CD4-positive, alpha-beta T cell (primary cell): ENCODE measurements at regions of chr1 and their contacts with region 1.

Region 1: DNA sequence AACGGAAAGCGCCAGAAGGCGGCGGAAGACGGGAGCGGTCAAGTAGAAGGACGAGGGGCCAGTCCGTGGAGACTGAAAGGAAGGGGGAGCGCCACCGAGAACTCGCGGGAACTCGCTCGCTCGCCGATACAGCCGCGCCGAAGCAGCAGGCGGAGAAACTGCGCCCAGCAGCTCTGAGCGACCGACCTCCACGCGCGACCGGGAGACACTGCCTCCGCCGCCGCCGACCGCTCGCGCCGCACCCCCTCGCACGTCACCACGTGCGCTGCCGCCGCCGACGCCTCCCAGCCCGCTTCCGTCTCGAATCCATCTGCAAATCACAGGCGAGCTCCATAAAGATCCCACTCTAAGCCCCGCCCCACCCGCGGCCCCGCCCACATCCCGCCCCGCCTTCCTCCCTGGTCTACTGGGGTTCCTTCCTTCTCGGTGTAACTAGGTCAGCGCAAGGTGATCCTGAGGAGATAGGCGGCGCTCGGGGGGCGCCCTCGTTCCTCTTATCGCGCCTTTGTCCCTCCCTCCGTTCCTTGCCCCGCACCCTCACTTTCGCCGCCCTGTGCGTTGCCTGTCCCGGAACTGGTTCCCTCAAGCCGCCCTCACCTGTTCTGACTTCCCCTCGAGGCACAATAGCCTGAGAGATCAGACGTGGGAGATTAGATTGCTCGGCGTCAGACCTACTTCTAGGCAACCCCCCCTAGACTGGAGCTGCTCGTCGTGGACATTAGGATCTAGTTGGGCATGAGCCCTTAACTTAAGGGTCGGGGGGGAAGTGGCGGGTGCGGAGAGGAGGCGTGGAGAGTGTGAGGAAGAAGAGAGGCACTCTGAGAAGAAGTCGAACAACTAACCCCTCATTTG is at the start of gene IVNS1ABP:
- DNase-seq: peak; percentile 94 to 99 (median 96)
- ATAC-seq: peak; percentile 68
- H3K4me3 ChIP-seq: peak within 1 kb of the TSS; percentile 88
- H3K4me3 Mint-ChIP-seq: peak within 1 kb of the TSS; percentile 95
- H3K27ac ChIP-seq: peak within 1 kb of the TSS; percentile 98 to 100
- H3K27ac Mint-ChIP-seq: peak within 1 kb of the TSS; percentile 98
- H3K4me1 ChIP-seq: peaks cover 17% of the 10 kb centered on the region
- H3K4me1 Mint-ChIP-seq: peaks cover 54% of the 10 kb centered on the region
- H3K27me3 ChIP-seq: no peaks in the 10 kb centered on the region
- H3K27me3 Mint-ChIP-seq: no peaks in the 10 kb centered on the region
- CTCF ChIP-seq: peak; percentile 43
- total RNA-seq, gene IVNS1ABP: 234 to 254 TPM

Region 2: DNA sequence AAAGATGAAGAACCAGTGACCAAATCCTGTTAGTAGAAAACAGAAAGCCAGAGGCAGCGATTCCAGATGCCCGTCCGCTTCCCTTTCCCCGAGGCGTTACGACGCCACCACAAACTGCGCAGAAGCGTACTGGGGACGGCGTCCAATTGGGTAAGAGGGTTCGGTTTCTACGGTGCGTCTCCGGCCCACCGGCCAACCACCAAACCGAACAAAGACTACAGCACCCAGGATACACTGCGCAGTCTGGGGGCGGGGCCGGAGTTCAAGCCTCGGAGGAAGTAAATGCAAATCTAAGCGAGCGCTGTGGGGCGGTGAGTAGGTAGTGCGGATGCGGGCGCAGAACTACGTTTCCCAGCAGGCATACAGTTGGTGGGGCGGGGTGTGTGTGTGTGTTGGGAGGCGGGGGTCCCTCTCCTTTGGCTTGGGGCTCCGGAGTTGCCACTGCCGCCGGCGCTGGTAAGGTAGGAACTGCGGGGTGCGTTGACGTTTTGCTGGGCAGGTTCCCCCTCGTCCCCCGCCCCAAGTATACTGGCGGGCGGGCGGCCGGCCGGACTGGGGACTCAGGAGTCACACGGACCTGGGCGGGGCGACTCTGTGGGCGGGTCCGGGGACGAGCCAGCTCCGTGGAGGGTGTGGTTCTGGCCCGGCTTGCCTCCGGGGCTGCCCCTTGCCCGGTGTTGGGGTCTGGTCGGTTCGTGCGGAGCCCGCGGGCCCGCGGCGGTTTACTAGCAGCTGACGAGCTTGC is 160.2 kb before region 1 on chr1 and contains the starts of genes SWT1 and TRMT1L:
- CTCF ChIA-PET with region 1: no interaction called
- POLR2A ChIA-PET with region 1: interaction called, 38 read pairs
- intact Hi-C with region 1: loop called (anchors 1 to 2 kb)
- DNase-seq: peak; percentile 96 to 99 (median 98)
- ATAC-seq: peak; percentile 91
- H3K4me3 ChIP-seq: peak within 1 kb of the TSS; percentile 92
- H3K4me3 Mint-ChIP-seq: peak within 1 kb of the TSS; percentile 99
- H3K27ac ChIP-seq: peak within 1 kb of the TSS; percentile 92 to 97
- H3K27ac Mint-ChIP-seq: peak within 1 kb of the TSS; percentile 95
- H3K4me1 ChIP-seq: peaks cover 16% of the 10 kb centered on the region
- H3K4me1 Mint-ChIP-seq: peaks cover 55% of the 10 kb centered on the region
- H3K27me3 ChIP-seq: no peaks in the 10 kb centered on the region
- H3K27me3 Mint-ChIP-seq: no peaks in the 10 kb centered on the region
- CTCF ChIP-seq: no peak
- total RNA-seq, gene SWT1: 4.1 to 5.3 TPM
- total RNA-seq, gene TRMT1L: 2.8 to 4.7 TPM

Region 3: DNA sequence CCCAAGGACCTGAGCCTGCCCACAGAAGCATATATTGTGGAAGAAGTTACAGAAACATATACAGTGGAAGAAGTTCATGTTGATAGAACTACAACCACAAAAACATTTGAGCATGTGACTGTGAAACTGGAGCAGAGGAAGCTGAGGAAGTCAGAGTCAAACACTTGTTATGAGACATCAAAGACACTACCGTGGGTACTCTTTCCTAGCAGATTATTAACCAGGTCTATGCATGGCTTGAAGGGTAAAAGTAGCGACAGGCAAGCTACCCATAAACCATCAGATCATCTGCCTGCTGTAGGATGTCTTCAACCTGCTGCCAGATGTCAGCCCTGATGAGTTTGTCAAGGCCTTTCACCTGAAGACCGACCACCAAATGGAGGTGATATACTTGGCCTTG is 36.0 kb before region 1 on chr1:
- CTCF ChIA-PET with region 1: interaction called, 4 read pairs
- POLR2A ChIA-PET with region 1: interaction called, 68 read pairs
- intact Hi-C with region 1: loop called (anchors 2 kb)
- DNase-seq: peak in 13 of 14 experiments; percentile 10 to 78 (median 25)
- ATAC-seq: peak; percentile 96
- H3K4me3 ChIP-seq: no peak overlapping the region
- H3K4me3 Mint-ChIP-seq: peak overlapping the region; percentile 83
- H3K27ac ChIP-seq: peak overlapping the region; percentile 58 to 62
- H3K27ac Mint-ChIP-seq: peak overlapping the region; percentile 91
- H3K4me1 ChIP-seq: peaks cover 45% of the 10 kb centered on the region
- H3K4me1 Mint-ChIP-seq: peaks cover 67% of the 10 kb centered on the region
- H3K27me3 ChIP-seq: no peaks in the 10 kb centered on the region
- H3K27me3 Mint-ChIP-seq: no peaks in the 10 kb centered on the region
- CTCF ChIP-seq: no peak

Region 4: DNA sequence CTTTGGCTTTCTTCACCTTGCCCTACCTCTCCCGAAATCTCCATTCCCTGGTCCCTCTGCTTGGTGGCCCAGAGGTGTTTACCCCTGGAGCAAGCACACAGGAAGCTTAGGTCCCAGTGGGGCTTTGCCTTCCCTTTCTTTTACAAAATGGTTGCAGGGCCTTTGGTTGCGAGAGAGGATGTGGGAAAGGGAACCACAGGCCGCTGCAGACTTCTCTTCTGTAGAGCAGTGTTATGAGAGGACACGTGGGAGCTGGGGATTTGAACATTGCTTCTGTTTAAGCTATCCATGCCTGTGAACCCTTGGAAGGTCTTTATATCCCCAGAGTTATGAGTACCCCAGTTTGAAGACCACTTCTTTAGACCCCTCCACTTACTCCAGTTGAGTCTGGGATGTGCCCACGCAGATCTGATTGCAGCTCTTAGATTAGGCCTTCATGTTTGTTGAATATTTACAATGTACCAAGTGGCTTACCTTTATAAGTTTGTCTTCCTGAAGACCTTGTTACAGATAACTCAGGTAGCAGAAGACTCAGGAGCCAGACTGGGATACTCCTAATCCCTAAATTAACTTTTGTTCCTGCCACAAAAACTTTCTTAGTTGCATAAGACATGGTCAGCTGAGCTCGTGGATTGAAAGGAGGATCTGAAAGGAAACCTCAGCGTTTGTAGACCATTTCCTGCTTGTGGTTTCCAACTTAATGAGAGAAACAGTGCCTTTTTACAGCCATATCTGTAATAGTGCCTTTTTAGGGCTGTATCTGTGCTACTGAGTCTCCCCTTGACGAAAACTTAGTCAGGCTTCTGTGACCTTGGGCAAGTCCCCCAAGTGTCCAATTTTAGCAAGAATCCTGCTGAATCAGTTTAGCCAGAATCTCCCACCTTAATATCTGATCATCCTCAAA is 21.7 kb after region 1 on chr1:
- CTCF ChIA-PET with region 1: interaction called, 3 read pairs
- POLR2A ChIA-PET with region 1: interaction called, 44 read pairs
- intact Hi-C with region 1: loop called in 1 of 2 experiments (anchors 2 kb)
- DNase-seq: peak in 11 of 14 experiments; percentile 12 to 88 (median 26)
- ATAC-seq: peak; percentile 92
- H3K4me3 ChIP-seq: no peak overlapping the region
- H3K4me3 Mint-ChIP-seq: peak overlapping the region; percentile 16
- H3K27ac ChIP-seq: peak overlapping the region in 1 of 2 donors; percentile 19
- H3K27ac Mint-ChIP-seq: peak overlapping the region; percentile 62
- H3K4me1 ChIP-seq: peaks cover 20% of the 10 kb centered on the region
- H3K4me1 Mint-ChIP-seq: peaks cover 42% of the 10 kb centered on the region
- H3K27me3 ChIP-seq: no peaks in the 10 kb centered on the region
- H3K27me3 Mint-ChIP-seq: no peaks in the 10 kb centered on the region
- CTCF ChIP-seq: no peak

Region 5: DNA sequence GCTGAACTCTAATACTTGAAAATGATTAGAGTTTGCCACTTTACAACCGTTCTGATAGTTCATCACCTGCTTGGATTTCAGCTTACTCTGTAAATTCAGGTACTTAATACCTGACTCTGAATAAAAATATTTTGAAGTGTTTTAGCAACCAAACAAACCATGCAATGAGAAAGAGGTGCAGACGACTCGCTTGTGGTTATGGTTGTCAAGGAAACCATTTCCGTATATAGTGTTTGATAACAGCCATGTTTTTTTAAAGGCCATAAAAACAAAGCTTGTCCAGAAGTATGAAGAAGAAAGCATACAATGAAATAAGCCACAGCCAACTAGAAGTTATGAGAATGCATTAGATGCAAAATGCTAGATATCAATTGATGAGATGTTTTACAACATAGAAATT is 249.7 kb after region 1 on chr1:
- CTCF ChIA-PET with region 1: interaction called, 26 read pairs
- POLR2A ChIA-PET with region 1: interaction called, 55 read pairs
- intact Hi-C with region 1: loop called (anchors 1 to 5 kb)
- DNase-seq: peak in 12 of 14 experiments; percentile 15 to 95 (median 38)
- ATAC-seq: peak; percentile 81
- H3K4me3 ChIP-seq: no peak overlapping the region
- H3K4me3 Mint-ChIP-seq: peak overlapping the region; percentile 74
- H3K27ac ChIP-seq: peak overlapping the region; percentile 88 to 91
- H3K27ac Mint-ChIP-seq: peak overlapping the region; percentile 94
- H3K4me1 ChIP-seq: peaks cover 40% of the 10 kb centered on the region
- H3K4me1 Mint-ChIP-seq: peaks cover 92% of the 10 kb centered on the region
- H3K27me3 ChIP-seq: no peaks in the 10 kb centered on the region
- H3K27me3 Mint-ChIP-seq: no peaks in the 10 kb centered on the region
- CTCF ChIP-seq: no peak

Region 6: DNA sequence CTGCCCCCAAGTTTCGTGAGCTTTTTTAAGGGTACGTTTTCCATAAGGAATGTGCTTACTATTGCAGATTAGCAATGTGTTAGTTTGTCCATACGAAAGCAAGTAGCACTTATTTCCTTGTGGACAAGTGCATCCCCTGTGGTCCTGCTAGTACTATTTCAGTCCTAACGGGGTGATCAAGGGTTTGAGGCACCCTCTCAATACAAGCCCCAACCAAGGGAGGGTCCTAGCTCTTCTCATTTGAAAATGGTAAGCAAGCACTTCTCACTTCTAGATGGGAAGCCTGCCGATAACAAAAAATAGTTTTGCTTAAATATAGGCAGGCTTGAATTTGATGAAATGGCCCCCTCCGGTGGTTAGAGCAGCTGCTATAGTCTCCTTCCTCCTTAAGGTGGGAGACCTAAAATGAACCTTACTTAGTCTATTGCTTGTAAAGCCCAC is 352.9 kb after region 1 on chr1:
- CTCF ChIA-PET with region 1: interaction called, 17 read pairs
- POLR2A ChIA-PET with region 1: interaction called, 39 read pairs
- intact Hi-C with region 1: loop called (anchors 1 to 5 kb)
- DNase-seq: peak; percentile 40 to 78 (median 54)
- ATAC-seq: peak; percentile 77
- H3K4me3 ChIP-seq: no peak overlapping the region
- H3K4me3 Mint-ChIP-seq: no peak overlapping the region
- H3K27ac ChIP-seq: no peak overlapping the region
- H3K27ac Mint-ChIP-seq: peak overlapping the region; percentile 55
- H3K4me1 ChIP-seq: peaks cover 14% of the 10 kb centered on the region
- H3K4me1 Mint-ChIP-seq: peaks cover 47% of the 10 kb centered on the region
- H3K27me3 ChIP-seq: no peaks in the 10 kb centered on the region
- H3K27me3 Mint-ChIP-seq: no peaks in the 10 kb centered on the region
- CTCF ChIP-seq: peak; percentile 71

Region 7: DNA sequence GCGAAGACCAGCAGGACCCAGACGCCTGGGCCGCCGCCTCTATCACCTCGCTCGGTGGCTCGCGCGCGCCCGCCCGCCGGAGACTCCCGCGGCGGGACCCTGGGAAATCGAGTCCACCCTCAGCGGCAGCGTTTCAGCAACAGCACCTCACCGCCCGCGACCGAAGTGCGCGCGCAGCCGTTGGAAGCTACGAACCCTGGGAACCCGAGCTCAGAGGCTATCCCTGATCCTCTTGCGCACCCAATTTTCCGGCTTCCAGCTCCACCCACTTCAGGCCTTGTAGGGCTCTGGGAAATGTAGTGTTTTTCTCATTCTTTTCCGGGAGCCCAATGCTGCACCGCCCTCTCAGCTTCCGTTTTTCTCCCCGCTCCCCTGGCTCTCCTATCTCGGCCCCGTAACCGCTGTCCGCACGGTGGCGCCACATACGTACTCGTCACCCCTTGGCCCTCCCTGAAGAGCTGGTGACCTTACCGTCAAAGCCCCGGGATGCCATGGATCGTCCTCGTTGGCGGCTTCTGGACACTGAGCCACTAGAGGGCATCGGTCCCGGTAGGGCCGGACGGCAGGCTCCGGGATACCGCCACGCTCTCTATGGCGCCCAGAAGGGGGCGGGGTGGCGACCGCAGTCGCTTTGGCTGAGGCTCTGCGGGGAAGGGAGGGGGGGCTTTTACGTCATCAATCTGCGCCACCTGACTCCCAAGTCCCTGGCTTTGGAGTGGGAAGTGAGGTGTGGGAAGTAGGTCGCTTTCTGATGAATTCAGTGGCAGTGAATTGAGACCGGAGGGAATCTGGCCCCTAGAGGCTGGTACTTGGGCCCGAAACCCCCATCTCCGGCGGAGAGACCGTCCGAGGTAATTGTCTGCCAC is 1058.1 kb after region 1 on chr1 and contains the starts of genes ODR4 and TPR:
- CTCF ChIA-PET with region 1: interaction called, 3 read pairs
- POLR2A ChIA-PET with region 1: interaction called, 6 read pairs
- intact Hi-C with region 1: loop called in 1 of 2 experiments (anchors 5 kb)
- DNase-seq: peak; percentile 89 to 99 (median 94)
- ATAC-seq: peak; percentile 87
- H3K4me3 ChIP-seq: peak within 1 kb of the TSS; percentile 79
- H3K4me3 Mint-ChIP-seq: peak within 1 kb of the TSS; percentile 92
- H3K27ac ChIP-seq: peak within 1 kb of the TSS; percentile 89 to 96
- H3K27ac Mint-ChIP-seq: peak within 1 kb of the TSS; percentile 93
- H3K4me1 ChIP-seq: peaks cover 16% of the 10 kb centered on the region
- H3K4me1 Mint-ChIP-seq: peaks cover 77% of the 10 kb centered on the region
- H3K27me3 ChIP-seq: no peaks in the 10 kb centered on the region
- H3K27me3 Mint-ChIP-seq: no peaks in the 10 kb centered on the region
- CTCF ChIP-seq: peak; percentile 85
- total RNA-seq, gene ODR4: 21.3 to 24.5 TPM
- total RNA-seq, gene TPR: 82.3 to 91.3 TPM